HEK293T (cell line): ENCODE measurements at regions of chr1 and their contacts with region 1.

Region 1: GRCh38 chr1:16078925-16079656 is 5.6 kb upstream of the FAM131C start:
- DNase-seq: peak; percentile 79

Region 2: DNA sequence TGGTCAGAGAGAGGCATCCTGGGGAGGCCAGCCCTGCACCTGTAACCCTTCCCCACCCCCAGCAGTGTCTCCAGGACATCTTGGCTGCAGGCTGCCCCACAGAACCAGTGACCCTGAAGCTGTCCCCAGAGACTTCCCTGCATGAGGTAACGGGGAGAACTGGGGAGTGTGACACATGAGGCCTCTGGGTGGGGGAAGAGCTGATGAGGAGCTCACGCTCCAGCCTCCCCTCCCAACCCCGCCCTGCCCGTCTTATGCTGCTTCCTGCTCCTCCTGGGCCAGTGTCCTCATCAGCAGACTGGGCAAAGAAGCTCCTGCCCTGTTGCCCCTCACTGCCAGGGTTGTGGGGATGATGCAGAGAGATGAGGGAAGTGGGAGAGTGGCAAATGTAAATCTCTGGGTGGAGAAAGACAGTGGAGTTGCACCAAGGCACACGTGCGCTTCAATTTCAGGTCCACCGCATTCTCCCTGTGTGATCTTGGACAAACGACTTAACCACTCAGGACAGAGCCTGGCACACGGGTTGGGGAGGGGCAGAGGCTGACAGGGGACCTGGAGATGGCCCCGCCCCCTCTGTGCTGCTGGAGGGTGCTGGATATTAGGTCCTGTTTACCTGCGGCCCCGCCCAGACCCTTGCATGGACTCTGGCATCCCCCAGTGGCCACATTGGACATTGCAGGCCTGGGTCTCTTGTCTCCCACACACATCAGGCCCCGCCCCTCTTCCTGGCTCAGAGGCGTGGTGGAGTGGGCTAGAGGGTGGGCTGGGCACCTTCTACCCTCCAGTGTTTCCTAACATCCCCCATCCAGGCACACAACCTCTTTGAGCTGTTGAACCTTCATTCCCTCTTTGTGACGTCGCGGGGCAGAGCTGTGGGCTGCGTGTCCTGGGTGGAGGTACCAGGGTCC is 23.2 kb before region 1 on chr1:
- CTCF ChIA-PET with region 1: no interaction called
- POLR2A ChIA-PET with region 1: no interaction called
- DNase-seq: peak; percentile 92

Region 3: GRCh38 chr1:16155532-16156410 is 76.7 kb after region 1 on chr1 and contains the start of gene EPHA2:
- CTCF ChIA-PET with region 1: interaction called, 11 read pairs
- POLR2A ChIA-PET with region 1: no interaction called
- DNase-seq: peak; percentile 81

Region 4: GRCh38 chr1:16187748-16188401 is 108.8 kb after region 1 on chr1:
- CTCF ChIA-PET with region 1: interaction called, 123 read pairs
- POLR2A ChIA-PET with region 1: interaction called, 5 read pairs
- DNase-seq: peak; percentile 86

Region 5: DNA sequence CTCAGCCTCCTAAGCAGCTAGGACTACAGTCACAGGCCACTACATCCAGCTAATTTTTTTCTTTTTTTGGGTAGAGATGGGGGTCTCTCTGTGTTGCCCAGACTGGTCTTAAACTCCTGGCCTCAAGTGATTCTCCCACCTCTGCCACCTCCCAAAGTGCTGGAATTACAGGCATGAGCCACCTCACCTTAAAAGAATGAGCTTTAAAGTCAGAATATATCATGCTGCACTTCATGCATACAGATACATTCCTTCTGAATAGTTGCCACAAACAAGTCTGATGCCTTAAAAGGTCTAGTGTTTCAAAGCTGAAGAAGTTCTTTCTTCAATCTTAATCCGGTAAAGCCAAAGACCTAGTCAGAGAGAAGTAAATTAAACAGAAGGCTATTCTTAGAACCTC is 181.7 kb after region 1 on chr1:
- CTCF ChIA-PET with region 1: no interaction called
- POLR2A ChIA-PET with region 1: no interaction called
- DNase-seq: no peak